Colonic mucosa (tissue), 4 donors: ENCODE measurements at regions of chr15 and their contacts with region 1.

Region 1: GRCh38 chr15:52780172-52780980 is 9.8 kb downstream of the ONECUT1 start:
- DNase-seq: peak; percentile 60
- H3K4me3 ChIP-seq: no peak overlapping the region
- H3K27ac ChIP-seq: no peak overlapping the region
- H3K4me1 ChIP-seq: no peaks in the 10 kb centered on the region
- H3K27me3 ChIP-seq: peaks cover 39% of the 10 kb centered on the region
- CTCF ChIP-seq: peak; percentile 84

Region 2: GRCh38 chr15:52709190-52709981 is 71.0 kb before region 1 on chr15:
- intact Hi-C with region 1: no loop called
- DNase-seq: peak; percentile 82
- H3K4me3 ChIP-seq: no peak overlapping the region
- H3K27ac ChIP-seq: no peak overlapping the region
- H3K4me1 ChIP-seq: peaks cover 3% of the 10 kb centered on the region
- H3K27me3 ChIP-seq: no peaks in the 10 kb centered on the region
- CTCF ChIP-seq: no peak

Region 3: DNA sequence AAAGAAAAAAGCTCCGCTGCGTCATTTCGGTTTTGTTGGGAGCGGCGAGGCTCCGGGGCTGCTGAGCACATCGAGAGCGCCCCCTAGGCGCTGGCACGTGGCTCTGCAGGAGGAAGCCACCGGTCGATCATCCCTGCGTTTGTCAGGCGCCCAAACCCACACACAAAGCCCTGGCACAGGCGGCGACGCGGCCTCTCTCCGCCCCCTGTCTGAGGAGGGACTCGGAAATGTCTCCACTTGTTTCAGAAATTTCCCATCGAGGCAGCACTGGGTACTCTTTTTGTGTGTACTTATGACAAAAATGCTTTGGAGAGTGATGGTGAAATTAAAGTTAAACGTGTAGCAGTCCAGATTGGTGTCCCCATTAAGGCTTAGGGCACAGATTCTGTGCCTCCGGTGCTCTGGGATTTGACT is 417.1 kb after region 1 on chr15:
- intact Hi-C with region 1: loop called (anchors 2 kb)
- DNase-seq: peak; percentile 42
- H3K4me3 ChIP-seq: no peak overlapping the region
- H3K27ac ChIP-seq: no peak overlapping the region
- H3K4me1 ChIP-seq: no peaks in the 10 kb centered on the region
- H3K27me3 ChIP-seq: no peaks in the 10 kb centered on the region
- CTCF ChIP-seq: peak; percentile 84

Region 4: DNA sequence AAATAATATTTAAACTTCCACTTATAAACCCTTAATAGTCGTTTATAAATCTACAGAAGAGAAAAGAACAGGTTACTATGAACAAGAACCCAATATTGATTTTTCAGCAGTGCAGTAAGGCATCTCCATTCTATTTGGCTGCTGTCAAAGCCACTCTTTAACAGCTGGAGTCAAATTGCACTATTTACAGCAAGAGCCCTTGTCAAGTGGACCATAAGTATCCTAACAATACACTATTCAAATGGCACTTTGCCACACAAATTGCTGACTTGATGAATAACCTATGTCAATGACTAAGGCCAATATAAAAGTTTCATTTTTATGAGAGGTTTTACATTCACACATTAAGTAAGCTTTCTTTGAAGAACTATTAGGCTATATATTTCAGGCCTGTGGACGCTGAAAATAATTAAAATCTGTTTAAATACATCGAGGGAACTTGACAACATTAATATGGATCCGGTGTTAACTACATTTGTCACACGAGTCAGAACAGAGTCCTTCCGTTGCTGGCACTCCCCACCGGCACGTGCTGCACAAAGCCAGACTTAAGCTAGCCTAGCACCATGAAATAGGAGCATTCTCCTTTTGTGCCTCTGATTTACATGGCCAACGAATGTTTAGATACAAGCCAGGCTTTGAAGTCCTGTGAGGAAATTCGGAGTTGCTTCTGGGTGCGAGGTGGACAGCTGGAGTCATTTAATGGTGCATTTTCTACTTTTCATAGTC is 878.6 kb after region 1 on chr15:
- intact Hi-C with region 1: loop called (anchors 5 kb)
- DNase-seq: no peak
- H3K4me3 ChIP-seq: no peak overlapping the region
- H3K27ac ChIP-seq: no peak overlapping the region
- H3K4me1 ChIP-seq: no peaks in the 10 kb centered on the region
- H3K27me3 ChIP-seq: no peaks in the 10 kb centered on the region
- CTCF ChIP-seq: no peak

Region 5: GRCh38 chr15:53716909-53717876 is 936.8 kb after region 1 on chr15:
- intact Hi-C with region 1: loop called (anchors 5 kb)
- DNase-seq: no peak
- H3K4me3 ChIP-seq: no peak overlapping the region
- H3K27ac ChIP-seq: no peak overlapping the region
- H3K4me1 ChIP-seq: no peaks in the 10 kb centered on the region
- H3K27me3 ChIP-seq: no peaks in the 10 kb centered on the region
- CTCF ChIP-seq: no peak